ENCODE measurements at regions of chr5 and their contacts with region 1.

Region 1: DNA sequence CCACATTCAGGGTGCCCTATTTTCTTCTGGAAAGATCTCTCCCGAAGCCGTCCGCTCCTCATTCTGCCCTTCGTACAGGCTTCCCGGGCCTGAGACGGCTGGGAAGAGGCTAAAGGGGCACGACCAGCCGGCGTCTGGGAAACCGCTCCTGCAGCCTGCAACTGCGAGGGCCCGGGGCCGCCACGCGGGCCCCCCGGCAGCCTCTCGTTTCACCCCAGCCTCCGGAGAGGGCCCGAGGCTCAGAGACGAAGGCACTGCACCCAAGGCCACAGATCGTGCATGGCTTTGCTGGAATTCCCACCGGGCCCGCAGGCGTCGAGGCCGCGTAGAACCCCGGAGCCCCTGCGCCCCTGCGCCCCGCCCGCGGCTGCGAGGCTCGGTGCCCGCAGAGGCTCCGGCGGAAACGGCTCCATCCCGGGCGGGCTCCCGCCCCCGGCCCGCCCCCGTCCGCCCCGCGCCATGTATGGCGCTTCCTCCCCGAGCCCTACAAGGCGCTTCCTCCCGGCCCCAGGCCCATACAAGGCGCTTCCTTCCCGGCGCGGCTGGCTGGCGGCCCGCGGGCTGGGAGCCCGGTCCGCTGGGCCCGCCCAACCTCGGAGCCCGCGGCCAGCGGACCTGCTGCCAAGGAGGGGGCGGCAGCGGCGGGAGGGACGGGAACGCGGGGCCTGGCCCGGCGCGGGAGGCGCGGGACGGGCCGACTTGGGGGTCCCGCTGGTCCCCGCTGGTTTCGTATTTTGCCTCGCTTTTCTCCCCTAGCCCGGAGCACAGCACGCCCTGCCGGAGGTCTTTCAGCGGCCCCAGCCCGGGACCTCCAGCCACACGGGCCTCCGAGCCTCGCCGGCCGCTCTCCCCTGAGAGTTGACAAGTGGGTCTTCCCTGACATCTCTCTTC is 26.6 kb downstream of the EGR1 start:
- DNase-seq: peak; percentile 92
- H3K4me3 ChIP-seq: peak overlapping the region; percentile 52
- H3K27ac ChIP-seq: peak overlapping the region; percentile 81
- H3K4me1 ChIP-seq: peaks cover 23% of the 10 kb centered on the region
- H3K27me3 ChIP-seq: no peaks in the 10 kb centered on the region
- CTCF ChIP-seq: no peak

Region 2: DNA sequence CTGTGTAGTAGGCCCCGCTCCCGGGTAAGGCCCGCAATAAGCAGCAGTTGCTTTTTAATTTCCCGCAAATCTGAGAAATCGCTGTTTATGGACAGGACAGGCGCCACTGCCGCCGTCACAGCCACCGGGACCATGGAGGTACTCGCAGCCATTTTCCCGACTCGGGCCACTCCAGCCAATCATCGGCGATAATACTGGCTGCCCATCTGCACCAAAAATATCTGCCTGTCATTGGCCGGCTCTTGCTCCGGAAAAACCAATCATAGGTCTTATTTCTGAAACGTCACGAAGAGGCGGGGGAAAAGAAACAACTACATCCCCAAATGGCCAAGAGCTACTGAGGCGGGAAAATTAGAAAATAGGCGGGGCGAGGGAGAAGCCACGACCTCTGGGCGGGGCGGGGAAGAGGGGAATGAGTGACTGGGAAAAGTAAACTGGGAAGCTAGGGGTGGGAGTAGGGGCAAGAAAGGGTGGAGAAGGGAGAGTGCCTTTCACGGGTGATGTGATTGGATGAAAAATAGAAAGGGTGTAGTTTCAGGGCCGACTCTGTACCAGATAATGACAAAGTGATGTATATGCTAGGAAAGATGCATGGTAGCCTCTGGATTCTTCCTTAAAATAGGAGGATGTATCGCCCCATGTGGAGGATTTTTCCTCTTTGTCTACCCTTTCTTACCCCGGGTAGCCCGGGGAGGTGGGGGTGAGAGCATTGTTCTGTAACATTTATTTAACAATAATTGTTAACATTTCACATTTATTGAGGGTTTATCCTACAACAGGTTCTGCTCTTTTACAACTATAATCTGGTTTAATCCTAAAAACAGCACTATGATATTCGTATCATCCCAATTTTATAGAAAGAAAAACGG is 278.5 kb before region 1 on chr5 and contains the start of gene CDC23:
- CTCF ChIA-PET with region 1: no interaction called
- POLR2A ChIA-PET with region 1: no interaction called
- intact Hi-C with region 1: loop called (anchors 10 kb)
- DNase-seq: peak; percentile 100
- H3K4me3 ChIP-seq: peak within 1 kb of the TSS; percentile 97
- H3K27ac ChIP-seq: peak within 1 kb of the TSS; percentile 83
- H3K4me1 ChIP-seq: peaks cover 12% of the 10 kb centered on the region
- H3K27me3 ChIP-seq: no peaks in the 10 kb centered on the region
- CTCF ChIP-seq: no peak
- total RNA-seq, gene CDC23: 54.0 and 55.1 TPM in 2 replicates